Vagina (tissue), 2 donors: ENCODE measurements at regions of chr6 and their contacts with region 1.

Region 1: DNA sequence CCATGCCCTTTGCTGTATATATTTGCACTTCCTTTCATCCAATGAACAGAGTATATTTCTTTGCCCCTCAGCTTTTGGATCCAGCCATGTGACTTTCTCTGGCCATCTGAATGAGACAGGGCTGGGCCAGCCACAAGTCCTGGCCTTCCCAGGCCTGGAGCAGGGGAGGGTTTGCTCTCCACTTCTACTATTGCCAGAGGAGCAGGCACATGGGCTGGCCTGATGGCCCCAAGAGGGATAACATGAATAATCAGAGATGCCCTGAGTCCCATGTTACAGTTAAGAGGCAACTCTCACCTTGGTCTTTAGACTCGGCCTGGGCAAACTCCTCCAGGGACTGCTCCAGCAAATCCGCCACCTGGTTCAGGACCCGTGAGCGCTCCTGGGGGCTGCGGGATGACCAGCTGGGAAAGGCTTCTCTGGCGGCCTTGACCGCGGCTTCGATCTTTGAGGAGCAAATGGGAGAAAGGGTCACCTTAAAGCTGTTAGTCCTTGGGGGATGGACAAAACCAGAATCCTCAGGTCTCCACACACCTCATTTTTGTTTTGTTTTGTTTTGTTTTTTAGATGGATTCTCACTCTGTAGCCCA is 6.3 kb downstream of the ALDH8A1 start:
- DNase-seq: no peak
- H3K4me3 ChIP-seq: no peak overlapping the region
- H3K27ac ChIP-seq: no peak overlapping the region
- H3K4me1 ChIP-seq: no peaks in the 10 kb centered on the region
- H3K27me3 ChIP-seq: no peaks in the 10 kb centered on the region
- CTCF ChIP-seq: no peak
- POLR2A ChIP-seq: no peak

Region 2: DNA sequence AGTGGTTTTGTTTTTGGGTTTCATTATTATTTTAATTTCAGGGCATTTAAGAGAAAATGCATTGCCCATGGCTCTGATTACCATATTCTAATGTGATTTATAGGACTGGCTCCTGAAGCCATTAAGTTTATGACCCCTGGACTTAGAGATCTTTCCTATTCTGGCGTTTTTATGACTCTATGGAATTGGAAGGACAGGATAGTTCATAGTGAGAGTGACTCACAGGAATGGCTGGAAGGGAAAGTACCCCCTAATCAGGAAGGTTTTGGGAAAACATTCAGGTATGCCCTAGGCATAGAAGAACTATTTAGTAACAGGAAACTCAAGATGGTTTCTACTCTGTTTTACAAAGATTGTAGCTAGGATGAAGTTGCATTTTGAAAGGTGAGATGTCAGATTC is 782.6 kb before region 1 on chr6:
- intact Hi-C with region 1: loop called (anchors 5 kb)
- DNase-seq: peak in 1 of 2 donors; percentile 0
- H3K4me3 ChIP-seq: no peak overlapping the region
- H3K27ac ChIP-seq: no peak overlapping the region
- H3K4me1 ChIP-seq: no peaks in the 10 kb centered on the region
- H3K27me3 ChIP-seq: no peaks in the 10 kb centered on the region
- CTCF ChIP-seq: no peak
- POLR2A ChIP-seq: no peak

Region 3: DNA sequence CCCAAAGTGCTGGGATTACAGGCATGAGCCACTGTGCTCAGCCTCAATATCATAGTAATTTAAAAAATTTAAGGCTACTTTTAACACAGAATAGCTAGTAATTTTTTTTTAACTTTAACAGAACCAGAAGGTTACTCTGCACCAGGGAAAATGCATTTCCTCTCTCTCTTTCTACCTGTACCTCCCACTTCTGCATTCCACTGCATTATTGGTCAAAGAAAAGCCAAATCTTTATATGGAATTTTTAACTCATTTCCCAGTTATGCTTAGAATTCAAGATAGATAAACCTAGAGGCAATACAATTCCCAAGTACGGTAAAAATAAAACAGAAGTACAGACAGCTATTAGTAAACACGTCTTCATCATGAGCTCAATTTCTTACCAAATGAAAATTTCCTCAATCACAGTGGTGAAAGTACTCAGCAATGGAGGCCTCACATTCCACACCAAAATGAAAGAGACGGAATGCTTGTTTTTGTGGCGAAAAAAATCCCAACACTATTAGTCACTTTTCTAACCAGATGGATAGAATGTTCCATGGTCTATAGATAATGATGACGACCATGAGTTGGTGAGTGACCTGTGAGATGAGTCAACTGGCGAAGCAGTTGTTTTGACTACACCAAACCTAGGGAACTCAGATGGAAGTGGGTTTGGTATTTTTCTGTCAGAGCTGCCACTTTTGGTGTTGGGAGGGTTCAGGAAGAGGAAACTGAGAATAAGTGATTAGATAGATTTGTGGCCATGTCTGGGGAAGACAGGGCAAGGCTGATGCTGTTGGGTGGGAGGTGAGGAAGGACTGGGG is 521.0 kb before region 1 on chr6:
- intact Hi-C with region 1: no loop called
- DNase-seq: no peak
- H3K4me3 ChIP-seq: no peak overlapping the region
- H3K27ac ChIP-seq: no peak overlapping the region
- H3K4me1 ChIP-seq: no peaks in the 10 kb centered on the region
- H3K27me3 ChIP-seq: no peaks in the 10 kb centered on the region
- CTCF ChIP-seq: no peak
- POLR2A ChIP-seq: no peak

Region 4: DNA sequence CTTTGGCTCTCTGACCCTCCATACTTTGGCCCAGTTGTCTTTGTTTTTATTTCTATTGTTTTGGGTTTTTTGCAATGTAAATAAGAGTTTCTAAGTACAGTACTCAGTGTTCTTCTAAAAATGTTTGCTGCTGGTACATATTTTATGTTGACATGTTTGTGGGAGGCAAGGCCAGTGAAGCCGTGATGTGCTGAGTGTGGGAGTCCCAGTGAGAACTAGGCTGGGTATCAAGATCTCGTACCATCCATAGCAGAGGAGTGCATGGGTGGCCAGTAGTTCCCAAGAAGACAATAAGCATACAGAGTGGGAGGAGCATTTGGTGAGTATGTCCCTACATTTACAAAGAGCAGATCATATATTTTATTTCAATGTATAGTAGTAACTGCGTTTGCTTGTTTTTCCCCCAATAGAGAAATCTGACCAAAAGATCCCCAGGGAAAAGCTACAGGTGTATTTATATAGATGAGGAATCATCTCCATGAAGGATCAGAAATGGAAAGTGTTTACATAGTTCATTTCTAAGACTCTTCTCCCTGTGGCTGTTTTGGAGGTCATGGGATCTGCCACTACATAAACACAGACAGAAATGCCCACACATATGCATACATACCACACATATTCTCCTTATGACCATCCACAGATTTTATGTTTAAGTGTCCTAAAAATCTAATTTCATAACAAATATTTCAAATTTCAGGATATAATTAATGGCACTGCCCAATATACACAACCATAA is 279.6 kb before region 1 on chr6:
- intact Hi-C with region 1: no loop called
- DNase-seq: no peak
- H3K4me3 ChIP-seq: no peak overlapping the region
- H3K27ac ChIP-seq: no peak overlapping the region
- H3K4me1 ChIP-seq: no peaks in the 10 kb centered on the region
- H3K27me3 ChIP-seq: no peaks in the 10 kb centered on the region
- CTCF ChIP-seq: no peak
- POLR2A ChIP-seq: no peak

Region 5: DNA sequence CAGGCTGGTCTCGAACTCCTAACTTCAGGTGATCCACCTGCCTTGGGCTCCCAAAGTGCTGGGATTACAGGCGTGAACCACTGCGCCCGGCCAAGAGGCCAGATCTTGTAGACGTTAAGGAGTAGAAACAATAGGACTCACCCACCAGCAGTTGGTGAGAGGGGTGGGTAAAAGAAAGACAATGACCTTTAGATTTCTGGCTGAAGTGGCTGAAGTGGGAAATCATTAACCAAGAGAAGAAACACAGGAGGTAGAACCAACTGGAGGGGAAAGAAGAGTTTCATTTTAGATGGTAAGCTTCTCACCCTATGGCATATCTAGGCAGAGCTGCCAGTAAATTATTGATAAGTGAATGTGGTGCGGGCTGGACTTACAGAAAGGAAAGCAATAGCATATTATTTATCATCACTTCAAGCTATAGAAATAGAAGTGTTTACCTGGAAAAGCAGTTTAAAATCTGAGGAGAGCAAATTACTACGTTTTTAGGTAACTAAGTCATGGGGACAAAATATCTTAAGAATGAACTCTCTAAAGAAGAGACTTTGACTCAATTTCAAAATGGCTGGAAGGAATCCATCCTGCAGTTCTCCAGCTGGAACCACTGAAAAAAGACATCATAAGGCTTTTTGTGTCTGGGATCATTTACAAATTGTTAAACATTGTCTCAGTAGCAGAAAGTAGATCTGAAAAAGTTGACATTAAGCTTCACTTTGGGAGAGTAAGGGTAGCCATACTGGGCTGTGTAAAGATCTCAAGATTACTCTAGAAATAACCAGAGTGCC is 103.3 kb before region 1 on chr6:
- intact Hi-C with region 1: no loop called
- DNase-seq: no peak
- H3K4me3 ChIP-seq: no peak overlapping the region
- H3K27ac ChIP-seq: no peak overlapping the region
- H3K4me1 ChIP-seq: no peaks in the 10 kb centered on the region
- H3K27me3 ChIP-seq: no peaks in the 10 kb centered on the region
- CTCF ChIP-seq: no peak
- POLR2A ChIP-seq: no peak